Endothelial cell of umbilical vein (primary cell): ENCODE measurements at regions of chr4 and their contacts with region 1.

Region 1: GRCh38 chr4:118772081-118772766 is 63.7 kb downstream of the SEC24D start:
- DNase-seq: peak; percentile 55
- H3K4me3 ChIP-seq: no peak overlapping the region
- H3K27ac ChIP-seq: peak overlapping the region; percentile 1
- H3K4me1 ChIP-seq: peaks cover 35% of the 10 kb centered on the region
- H3K27me3 ChIP-seq: no peaks in the 10 kb centered on the region
- CTCF ChIP-seq: peak in 1 of 2 donors; percentile 32
- POLR2A ChIP-seq: no peak

Region 2: GRCh38 chr4:118783887-118784286 is 11.7 kb after region 1 on chr4:
- CTCF ChIA-PET with region 1: interaction called, 11 read pairs
- POLR2A ChIA-PET with region 1: no interaction called
- dilution Hi-C with region 1: no loop called
- intact Hi-C with region 1: no loop called
- DNase-seq: no peak
- H3K4me3 ChIP-seq: no peak overlapping the region
- H3K27ac ChIP-seq: no peak overlapping the region
- H3K4me1 ChIP-seq: peaks cover 2% of the 10 kb centered on the region
- H3K27me3 ChIP-seq: no peaks in the 10 kb centered on the region
- CTCF ChIP-seq: no peak
- POLR2A ChIP-seq: no peak

Region 3: DNA sequence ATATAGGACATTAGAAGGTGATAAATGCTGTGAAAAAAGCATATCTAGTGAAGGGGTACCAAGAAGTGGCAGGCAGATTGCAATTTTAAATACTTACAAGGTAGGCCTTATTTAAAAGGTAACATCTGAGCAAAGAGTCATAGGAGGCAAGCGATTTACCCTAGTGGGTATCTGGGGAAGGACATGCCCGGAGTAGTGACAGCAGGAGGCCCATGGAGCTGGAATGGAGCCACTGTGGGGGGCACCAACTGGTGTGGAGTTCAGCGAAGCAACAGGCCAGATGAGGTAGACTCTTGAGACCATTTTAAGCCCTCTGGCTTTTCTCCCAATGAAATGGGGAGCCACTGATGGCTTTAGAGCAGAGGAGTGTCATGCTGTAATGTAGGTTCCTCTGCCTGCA is 26.4 kb after region 1 on chr4:
- CTCF ChIA-PET with region 1: interaction called, 9 read pairs
- POLR2A ChIA-PET with region 1: interaction called, 4 read pairs
- dilution Hi-C with region 1: no loop called
- intact Hi-C with region 1: loop called (anchors 1 kb)
- DNase-seq: no peak
- H3K4me3 ChIP-seq: no peak overlapping the region
- H3K27ac ChIP-seq: no peak overlapping the region
- H3K4me1 ChIP-seq: peaks cover 13% of the 10 kb centered on the region
- H3K27me3 ChIP-seq: no peaks in the 10 kb centered on the region
- CTCF ChIP-seq: no peak
- POLR2A ChIP-seq: no peak

Region 4: DNA sequence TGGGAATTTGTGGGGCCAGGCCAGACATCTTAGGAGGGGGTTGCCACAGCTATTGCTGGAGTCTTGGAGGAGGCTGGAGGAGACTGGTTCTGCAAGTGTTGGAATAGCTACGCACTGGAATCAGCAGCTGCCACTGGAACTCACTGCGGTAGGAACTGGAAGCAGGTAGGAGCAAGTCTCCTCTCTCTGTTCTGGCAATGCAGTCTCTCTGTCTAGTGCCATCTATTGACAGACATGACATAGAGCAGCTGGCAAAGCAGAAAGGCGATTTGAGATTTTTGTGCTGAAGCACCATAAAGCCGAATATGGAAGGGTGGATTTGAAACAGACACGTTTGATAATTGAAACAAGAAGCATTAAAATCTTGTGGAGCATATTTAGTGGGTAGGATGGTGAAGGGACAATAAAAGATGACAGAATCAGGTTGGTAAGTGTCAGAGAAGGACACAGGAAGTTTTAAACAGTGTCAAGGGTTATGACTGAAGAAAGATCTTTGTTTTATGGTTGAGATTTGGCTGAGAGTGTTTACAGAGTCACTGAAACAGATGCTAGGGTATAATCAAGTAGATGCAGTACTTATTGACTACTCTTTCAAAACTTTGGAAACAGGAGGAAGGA is 93.0 kb after region 1 on chr4:
- CTCF ChIA-PET with region 1: interaction called, 12 read pairs
- POLR2A ChIA-PET with region 1: no interaction called
- dilution Hi-C with region 1: no loop called
- intact Hi-C with region 1: loop called (anchors 1 kb)
- DNase-seq: peak; percentile 64
- H3K4me3 ChIP-seq: no peak overlapping the region
- H3K27ac ChIP-seq: no peak overlapping the region
- H3K4me1 ChIP-seq: peaks cover 13% of the 10 kb centered on the region
- H3K27me3 ChIP-seq: no peaks in the 10 kb centered on the region
- CTCF ChIP-seq: peak; percentile 58 to 77
- POLR2A ChIP-seq: no peak

Region 5: DNA sequence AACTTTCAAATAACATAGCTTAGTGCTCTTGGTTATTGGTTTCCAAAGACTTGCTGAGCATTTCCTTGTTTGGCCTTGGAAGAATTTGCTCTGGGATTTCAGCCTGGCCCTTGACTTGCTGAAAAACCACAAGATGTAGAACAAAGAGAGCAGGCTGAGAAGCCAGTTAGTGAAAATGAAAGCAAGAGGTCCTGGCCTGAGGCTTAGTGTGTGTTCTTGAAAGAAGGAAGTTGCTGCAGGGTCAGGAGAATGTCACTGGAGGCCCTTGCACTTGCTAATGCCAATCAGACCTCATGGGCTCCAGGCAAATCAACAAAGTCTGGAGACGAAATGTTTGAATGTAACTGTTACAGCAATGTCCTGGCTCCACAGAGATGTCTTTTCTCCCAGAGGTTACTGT is 195.8 kb after region 1 on chr4:
- CTCF ChIA-PET with region 1: interaction called, 79 read pairs
- POLR2A ChIA-PET with region 1: no interaction called
- dilution Hi-C with region 1: no loop called
- intact Hi-C with region 1: loop called (anchors 1 kb)
- DNase-seq: peak; percentile 38
- H3K4me3 ChIP-seq: no peak overlapping the region
- H3K27ac ChIP-seq: no peak overlapping the region
- H3K4me1 ChIP-seq: no peaks in the 10 kb centered on the region
- H3K27me3 ChIP-seq: no peaks in the 10 kb centered on the region
- CTCF ChIP-seq: no peak
- POLR2A ChIP-seq: no peak